Activated CD8-positive, alpha-beta T cell treated with anti-CD3 and anti-CD28 coated beads for 36 hours (primary cell): ENCODE measurements at regions of chr19 and their contacts with region 1.

Region 1: DNA sequence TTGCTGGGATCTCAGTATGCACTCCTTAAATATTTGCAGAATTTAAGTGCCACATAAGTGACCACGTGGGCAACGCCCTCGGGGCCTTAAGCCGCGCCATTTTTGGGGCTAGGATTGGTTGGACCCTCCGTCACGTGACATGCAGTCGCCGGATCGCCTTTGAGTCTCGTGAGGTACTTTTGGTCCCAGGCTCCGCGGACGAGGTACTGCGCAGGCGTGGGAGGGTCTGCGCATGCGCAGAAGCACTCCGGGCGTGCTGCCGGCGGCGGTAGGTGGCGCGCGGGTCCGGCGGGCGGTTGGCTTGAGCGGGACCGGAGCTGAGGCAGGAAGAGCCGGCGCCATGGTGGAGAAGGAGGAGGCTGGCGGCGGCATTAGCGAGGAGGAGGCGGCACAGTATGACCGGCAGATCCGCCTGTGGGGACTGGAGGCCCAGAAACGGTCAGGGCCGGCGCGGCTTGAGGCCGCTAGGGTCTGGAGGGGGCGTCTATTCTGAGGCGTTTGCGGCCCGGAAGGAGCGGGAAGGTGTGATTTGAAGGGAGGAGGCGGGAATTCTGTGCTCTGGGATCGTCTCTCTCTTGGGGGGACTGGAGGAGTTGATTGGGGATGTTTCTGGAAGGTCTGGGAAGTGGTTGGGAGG is at the start of gene SAE1:
- DNase-seq: peak; percentile 93
- ATAC-seq: peak; percentile 91
- H3K4me3 Mint-ChIP-seq: peak within 1 kb of the TSS; percentile 100
- H3K27ac Mint-ChIP-seq: peak within 1 kb of the TSS; percentile 100
- H3K4me1 Mint-ChIP-seq: peaks cover 37% of the 10 kb centered on the region
- H3K27me3 Mint-ChIP-seq: peaks cover 2% of the 10 kb centered on the region
- CTCF ChIP-seq: peak; percentile 51
- total RNA-seq, gene SAE1: 125 to 127 TPM

Region 2: DNA sequence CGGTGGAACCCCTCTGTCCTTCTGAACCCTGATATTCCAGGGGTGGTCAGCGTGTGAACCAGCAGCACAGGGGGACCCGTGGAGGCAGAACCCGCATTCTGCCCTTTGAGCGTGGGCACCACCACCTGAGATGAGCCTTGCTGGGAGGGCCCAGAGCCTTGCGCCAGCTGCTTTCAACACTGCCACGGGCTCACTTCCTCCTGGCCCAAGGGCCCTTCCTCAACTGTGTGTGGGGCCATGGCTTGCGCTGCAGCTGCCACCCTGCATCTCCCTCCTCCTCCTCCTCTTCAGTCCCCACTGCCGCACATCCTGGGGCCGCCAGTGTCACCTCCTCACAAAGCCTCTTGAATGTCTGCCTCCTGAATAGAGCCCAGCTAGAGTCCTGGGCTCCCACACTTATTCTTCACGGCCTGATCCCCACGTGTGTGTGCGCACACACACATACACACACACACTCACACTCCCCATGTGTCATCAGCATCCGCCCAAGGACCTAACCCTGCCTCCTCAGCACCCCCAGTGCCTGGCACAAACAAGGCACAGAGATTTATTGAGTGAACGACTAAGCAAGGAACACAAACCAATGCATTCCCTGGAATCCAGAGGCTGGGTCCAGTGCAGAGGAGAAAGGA is 55.4 kb before region 1 on chr19:
- CTCF ChIA-PET with region 1: interaction called, 94 read pairs
- POLR2A ChIA-PET with region 1: interaction called, 5 read pairs
- intact Hi-C with region 1: loop called (anchors 5 kb)
- DNase-seq: no peak
- ATAC-seq: no peak
- H3K4me3 Mint-ChIP-seq: no peak overlapping the region
- H3K27ac Mint-ChIP-seq: no peak overlapping the region
- H3K4me1 Mint-ChIP-seq: peaks cover 4% of the 10 kb centered on the region
- H3K27me3 Mint-ChIP-seq: no peaks in the 10 kb centered on the region
- CTCF ChIP-seq: no peak

Region 3: DNA sequence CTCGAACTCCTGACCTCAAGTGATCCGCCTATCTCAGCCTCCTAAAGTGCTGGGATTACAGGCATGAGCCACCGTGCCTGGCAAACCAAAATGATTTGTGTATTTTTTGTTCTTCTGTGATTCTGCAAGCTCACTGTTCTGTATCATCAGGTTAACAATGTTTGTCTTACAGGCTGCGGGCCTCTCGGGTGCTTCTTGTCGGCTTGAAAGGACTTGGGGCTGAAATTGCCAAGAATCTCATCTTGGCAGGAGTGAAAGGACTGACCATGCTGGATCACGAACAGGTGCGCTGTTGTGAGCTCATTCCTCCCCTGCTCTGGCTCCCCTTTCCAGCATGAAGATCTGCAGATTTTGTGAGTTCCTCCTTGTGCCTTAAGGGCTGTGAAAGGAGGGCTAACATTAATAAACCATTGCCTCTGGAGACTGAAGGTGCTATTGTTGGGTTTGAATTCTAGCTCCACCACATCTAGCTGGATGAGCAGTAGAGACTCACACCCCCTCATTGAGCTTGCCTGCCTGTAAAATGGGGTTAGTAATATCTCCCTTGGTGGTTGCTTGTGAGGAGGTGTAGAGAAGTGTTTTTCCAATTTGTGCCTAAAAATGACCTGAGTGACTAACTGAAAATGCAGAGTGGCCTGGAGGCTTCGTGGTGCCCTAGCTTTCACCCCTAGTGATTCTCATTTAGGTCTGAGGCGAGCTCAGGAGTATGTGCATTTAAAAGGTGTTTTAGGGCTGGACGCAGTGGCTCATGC is 12.8 kb after region 1 on chr19:
- CTCF ChIA-PET with region 1: interaction called, 6 read pairs
- POLR2A ChIA-PET with region 1: interaction called, 20 read pairs
- intact Hi-C with region 1: no loop called
- DNase-seq: no peak
- ATAC-seq: peak; percentile 29
- H3K4me3 Mint-ChIP-seq: no peak overlapping the region
- H3K27ac Mint-ChIP-seq: no peak overlapping the region
- H3K4me1 Mint-ChIP-seq: peaks cover 53% of the 10 kb centered on the region
- H3K27me3 Mint-ChIP-seq: no peaks in the 10 kb centered on the region
- CTCF ChIP-seq: no peak

Region 4: DNA sequence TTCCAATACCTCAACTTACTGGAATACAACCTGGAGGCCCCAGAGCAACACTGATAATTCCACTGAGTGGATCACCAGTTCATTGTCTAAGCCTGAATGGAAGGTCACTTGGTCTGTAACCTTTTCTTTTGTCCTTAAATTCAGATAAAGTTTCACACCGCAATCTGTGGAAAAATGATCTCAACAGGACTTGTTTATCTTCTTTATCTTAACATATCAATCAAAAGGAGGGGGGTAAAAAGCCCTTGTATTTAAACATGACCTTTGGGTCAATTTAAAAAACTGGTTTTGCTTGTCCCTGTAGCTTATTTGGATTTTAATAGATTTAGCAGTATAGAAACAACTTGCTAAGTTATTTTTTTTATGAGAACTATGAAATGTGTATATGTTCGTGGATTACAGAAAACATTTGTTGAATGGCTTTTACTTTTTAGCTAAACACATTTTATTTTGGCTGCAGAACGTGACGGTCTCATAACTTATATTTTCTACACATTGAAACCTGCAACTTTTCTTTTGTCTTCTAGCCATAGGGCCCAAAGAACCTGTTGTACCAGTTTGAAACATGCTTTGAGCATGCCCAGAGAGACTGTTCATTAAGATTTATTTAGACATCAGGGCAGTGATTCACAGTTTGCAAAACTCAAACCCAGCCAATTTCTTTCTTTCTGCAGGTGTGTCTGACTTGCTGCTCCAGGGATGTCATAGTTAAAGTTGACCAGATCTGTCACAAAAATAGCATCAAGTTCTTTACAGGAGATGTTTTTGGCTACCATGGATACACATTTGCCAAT is 21.7 kb after region 1 on chr19:
- CTCF ChIA-PET with region 1: interaction called, 13 read pairs
- POLR2A ChIA-PET with region 1: interaction called, 5 read pairs
- intact Hi-C with region 1: no loop called
- DNase-seq: no peak
- ATAC-seq: no peak
- H3K4me3 Mint-ChIP-seq: no peak overlapping the region
- H3K27ac Mint-ChIP-seq: peak overlapping the region; percentile 23
- H3K4me1 Mint-ChIP-seq: peaks cover 45% of the 10 kb centered on the region
- H3K27me3 Mint-ChIP-seq: no peaks in the 10 kb centered on the region
- CTCF ChIP-seq: no peak

Region 5: GRCh38 chr19:47267350-47267759 is 136.6 kb after region 1 on chr19:
- CTCF ChIA-PET with region 1: no interaction called
- POLR2A ChIA-PET with region 1: no interaction called
- intact Hi-C with region 1: no loop called
- DNase-seq: no peak
- ATAC-seq: no peak
- H3K4me3 Mint-ChIP-seq: no peak overlapping the region
- H3K27ac Mint-ChIP-seq: no peak overlapping the region
- H3K4me1 Mint-ChIP-seq: peaks cover 2% of the 10 kb centered on the region
- H3K27me3 Mint-ChIP-seq: no peaks in the 10 kb centered on the region
- CTCF ChIP-seq: no peak